Left lung (tissue), 14 donors: ENCODE measurements at regions of chr17 and their contacts with region 1.

Region 1: DNA sequence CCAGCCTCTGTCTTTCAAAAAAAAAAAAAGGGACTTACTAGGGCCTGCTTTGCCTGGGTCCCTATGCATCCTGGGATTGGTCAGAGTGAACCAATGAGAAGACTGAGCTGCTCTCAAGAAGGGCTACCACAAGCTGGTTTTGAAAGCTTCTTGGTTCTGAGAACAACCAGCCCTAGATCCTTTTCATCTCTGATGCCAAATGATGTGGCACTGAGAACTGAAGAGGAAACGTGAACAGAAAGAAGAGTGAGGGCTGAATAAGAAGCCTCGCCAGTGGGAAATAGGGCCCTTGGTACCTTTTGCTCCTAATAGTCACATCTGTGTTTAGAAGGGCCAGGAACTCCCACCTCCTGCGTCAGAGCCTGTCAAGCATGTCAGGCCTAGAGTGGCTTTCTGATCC is 10.7 kb downstream of the TACO1 start:
- DNase-seq: no peak
- ATAC-seq: no peak
- H3K4me3 ChIP-seq: no peak overlapping the region
- H3K27ac ChIP-seq: peak overlapping the region in 1 of 2 donors; percentile 8
- H3K4me1 ChIP-seq: no peaks in the 10 kb centered on the region
- H3K27me3 ChIP-seq: no peaks in the 10 kb centered on the region
- CTCF ChIP-seq: no peak

Region 2: DNA sequence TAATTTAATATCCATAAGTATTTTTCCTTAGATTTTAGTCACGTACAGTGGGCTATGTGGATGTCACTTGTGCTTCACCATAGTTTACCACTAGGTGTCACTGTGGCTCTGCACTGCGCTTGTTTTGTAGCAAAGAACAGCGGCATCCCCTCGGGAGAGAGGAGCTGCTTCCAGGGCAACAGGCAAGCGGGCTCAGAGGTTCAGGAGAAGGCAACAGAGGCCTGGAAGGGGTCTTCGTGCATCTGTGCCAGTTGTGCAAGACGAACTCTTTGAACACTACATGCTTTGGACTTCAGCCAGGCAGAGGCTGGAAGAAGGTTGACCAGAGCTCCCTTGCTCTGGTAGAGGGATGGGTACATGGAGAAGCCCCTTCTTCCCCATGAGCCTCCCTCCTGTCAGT is 185.9 kb before region 1 on chr17:
- intact Hi-C with region 1: loop called (anchors 5 to 10 kb)
- DNase-seq: peak in 3 of 4 donors; percentile 66 to 89 (median 75)
- ATAC-seq: peak; percentile 91
- H3K4me3 ChIP-seq: no peak overlapping the region
- H3K27ac ChIP-seq: no peak overlapping the region
- H3K4me1 ChIP-seq: peaks cover 0 to 28% of the 10 kb centered on the region in 2 donors
- H3K27me3 ChIP-seq: no peaks in the 10 kb centered on the region
- CTCF ChIP-seq: peak; percentile 84 to 94

Region 3: GRCh38 chr17:63571763-63572271 is 39.5 kb before region 1 on chr17:
- intact Hi-C with region 1: no loop called
- DNase-seq: no peak
- ATAC-seq: peak; percentile 29
- H3K4me3 ChIP-seq: no peak overlapping the region
- H3K27ac ChIP-seq: no peak overlapping the region
- H3K4me1 ChIP-seq: peaks cover 0 to 16% of the 10 kb centered on the region in 2 donors
- H3K27me3 ChIP-seq: no peaks in the 10 kb centered on the region
- CTCF ChIP-seq: no peak